ENCODE measurements at regions of chr2 and their contacts with region 1.

Region 1: DNA sequence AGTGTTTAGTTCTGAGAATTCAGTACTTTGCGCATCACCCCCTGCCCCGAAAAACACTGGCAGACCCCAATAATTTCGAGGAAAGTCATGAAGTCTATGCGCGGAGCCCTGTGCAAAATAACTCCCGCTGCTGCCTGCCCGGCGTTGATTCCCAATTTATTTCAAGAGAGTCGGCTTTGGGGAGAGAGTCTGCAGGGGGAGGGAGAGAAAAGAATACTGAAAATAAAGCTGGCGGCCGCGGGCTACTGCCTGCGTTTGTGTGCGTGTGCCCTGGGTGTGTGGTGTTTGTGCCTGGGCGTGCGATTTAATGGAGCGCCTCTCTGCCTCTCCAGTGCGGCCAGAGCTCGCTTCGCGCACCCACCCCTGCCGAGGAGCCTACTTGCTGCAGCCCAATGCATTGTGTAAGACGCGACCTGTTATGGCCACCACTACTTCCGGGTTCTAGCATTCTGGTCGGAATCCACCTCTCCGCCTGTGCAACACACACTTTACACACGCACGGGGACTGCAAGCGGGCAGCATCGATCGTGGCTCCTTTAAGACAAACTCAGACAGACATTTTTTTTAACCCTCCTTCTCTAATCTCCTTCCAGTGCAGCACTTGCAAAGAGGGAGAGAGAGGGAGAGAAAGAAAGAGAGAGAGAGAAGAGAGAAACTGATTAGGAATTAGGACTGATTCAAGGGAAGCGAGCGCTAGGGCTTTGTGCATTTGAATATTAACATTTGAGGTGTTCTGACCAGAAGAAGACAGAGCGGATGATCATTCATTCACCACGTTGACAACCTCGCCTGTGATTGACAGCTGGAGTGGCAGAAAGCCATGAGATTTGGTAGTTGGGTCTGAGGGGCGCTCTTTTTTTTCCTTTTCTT is at the start of gene MEIS1:
- H3K4me3 Mint-ChIP-seq: peak within 1 kb of the TSS; percentile 94
- H3K27ac Mint-ChIP-seq: no peak within 1 kb of the TSS
- H3K4me1 Mint-ChIP-seq: peaks cover 59% of the 10 kb centered on the region
- H3K27me3 Mint-ChIP-seq: peaks cover 91% of the 10 kb centered on the region

Region 2: DNA sequence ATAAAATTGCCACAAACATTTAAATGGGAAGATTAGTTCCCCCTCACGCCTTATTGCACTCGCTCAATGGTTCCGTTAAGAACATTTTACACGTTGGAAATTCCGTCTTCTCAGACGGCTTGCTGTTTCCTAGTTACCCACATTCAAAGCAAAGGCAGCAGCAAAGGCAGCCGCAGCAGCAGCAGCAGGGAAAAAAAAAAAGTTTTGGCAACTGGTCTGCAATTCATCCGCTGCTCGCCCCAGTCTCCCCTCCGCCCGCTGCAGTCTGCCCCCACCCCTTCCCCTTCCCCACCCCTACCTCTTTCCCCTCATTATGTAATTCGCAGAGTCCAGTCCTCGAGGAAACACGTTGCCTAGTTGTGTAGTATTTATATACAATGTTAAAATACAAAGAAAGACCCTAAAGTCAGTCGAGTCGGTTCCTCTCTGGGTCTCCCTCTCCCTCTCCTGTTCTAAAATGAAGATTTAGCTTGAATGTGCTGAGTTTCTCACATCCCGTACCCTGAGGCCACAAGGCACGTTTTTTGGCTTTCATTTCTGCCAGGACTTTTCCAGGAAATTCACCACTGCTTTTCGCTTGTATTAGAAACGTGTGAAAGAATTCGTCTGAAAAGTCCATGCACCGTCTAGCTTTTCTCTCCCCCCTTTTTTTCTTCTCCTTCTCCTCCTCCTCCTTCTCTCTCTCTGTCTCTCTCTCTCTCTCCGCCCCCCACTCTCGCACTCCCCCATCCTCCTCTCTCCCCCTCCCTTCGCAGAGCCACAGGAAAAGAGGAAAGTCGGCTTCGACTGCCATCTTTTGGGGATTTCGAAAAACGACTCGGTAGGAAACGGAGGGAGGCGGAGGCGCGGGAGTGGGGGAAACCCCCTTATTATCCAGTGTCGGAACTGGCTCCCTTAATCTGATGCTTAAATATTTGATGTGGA is 140.0 kb after region 1 on chr2:
- intact Hi-C with region 1: loop called (anchors 5 kb)
- H3K4me3 Mint-ChIP-seq: peak overlapping the region; percentile 75
- H3K27ac Mint-ChIP-seq: peak overlapping the region; percentile 22
- H3K4me1 Mint-ChIP-seq: peaks cover 38% of the 10 kb centered on the region
- H3K27me3 Mint-ChIP-seq: peaks cover 66% of the 10 kb centered on the region

Region 3: DNA sequence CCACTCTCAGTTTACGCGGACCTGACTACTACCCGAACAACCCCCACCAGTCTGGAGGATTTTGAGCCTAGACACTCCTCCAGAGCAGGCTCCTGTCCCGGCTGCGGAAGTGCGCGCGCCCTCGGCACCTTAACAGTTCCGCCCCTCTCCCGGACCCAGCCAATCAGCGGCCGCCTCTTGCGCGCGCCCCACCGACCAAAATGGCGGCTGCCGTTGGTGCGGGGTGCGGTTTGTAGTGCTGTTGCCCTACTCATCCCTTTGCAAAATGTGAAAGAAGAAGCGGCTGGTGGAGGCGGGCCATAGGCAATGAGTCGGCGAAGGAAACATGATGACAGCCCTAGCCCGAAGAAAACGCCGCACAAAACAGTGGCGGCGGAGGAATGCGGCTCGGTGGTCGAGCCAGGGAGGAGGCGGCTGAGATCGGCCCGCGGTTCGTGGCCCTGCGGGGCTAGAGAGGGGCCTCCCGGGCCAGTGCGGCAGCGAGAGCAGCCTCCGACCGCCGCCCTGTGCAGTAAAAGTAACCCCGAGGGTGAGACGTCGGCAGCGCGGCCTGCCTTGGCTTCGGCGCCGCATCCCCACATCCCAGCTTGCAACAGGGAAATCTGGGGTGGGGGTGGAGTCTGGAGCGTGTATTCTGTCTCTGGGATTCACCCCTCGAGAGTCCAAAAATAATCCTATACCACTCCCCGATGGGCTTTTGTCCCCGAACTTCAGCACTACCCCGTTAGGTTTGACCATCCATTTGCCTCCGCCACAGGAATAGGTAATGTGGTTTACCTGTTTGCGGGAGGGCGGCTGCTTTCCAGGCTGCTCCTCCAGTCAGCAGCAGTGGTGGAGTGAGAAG is 962.5 kb after region 1 on chr2 and contains the start of gene ETAA1:
- intact Hi-C with region 1: loop called (anchors 10 kb)
- H3K4me3 Mint-ChIP-seq: peak within 1 kb of the TSS; percentile 97
- H3K27ac Mint-ChIP-seq: peak within 1 kb of the TSS; percentile 98
- H3K4me1 Mint-ChIP-seq: peaks cover 11% of the 10 kb centered on the region
- H3K27me3 Mint-ChIP-seq: no peaks in the 10 kb centered on the region

Region 4: GRCh38 chr2:68031542-68032160 is 1596.7 kb after region 1 on chr2:
- intact Hi-C with region 1: loop called (anchors 2 kb)
- H3K4me3 Mint-ChIP-seq: no peak overlapping the region
- H3K27ac Mint-ChIP-seq: no peak overlapping the region
- H3K4me1 Mint-ChIP-seq: no peaks in the 10 kb centered on the region
- H3K27me3 Mint-ChIP-seq: peaks cover 6% of the 10 kb centered on the region